ENCODE measurements at regions of chr11 and their contacts with region 1.

Region 1: DNA sequence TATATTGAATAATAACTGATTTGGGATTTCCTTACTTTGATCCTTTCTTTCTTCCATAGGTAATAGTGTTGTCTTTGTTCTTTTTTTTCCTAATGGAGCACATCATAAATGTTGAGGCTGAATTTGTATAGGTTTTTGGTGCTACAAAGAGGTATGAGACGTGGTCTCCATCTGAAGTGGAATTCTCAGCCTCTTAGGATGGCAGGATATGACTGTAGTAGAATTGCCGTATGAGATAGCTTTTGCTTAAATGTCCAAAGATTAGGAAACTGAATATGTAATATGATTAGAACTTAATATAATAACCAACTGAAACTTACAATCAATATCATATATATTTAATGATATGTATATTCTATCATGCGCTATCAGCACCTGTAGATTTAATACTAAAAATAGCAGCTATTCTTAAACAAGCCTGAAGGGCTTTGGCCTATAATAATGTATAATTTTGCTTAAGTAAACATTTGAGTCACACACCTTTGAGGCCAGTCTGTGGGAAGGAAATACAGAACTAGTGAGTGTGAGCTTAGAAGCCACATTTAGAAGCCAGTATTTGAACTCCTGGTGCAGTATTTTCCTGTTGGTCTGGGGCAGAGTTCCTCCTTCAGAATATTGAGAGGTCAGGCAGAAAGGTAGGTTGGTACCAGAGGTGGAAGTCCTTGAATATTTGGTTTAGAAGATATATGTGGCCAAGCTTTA is 62.6 kb downstream of the SWAP70 start:
- DNase-seq: no peak
- CTCF ChIP-seq: no peak

Region 2: DNA sequence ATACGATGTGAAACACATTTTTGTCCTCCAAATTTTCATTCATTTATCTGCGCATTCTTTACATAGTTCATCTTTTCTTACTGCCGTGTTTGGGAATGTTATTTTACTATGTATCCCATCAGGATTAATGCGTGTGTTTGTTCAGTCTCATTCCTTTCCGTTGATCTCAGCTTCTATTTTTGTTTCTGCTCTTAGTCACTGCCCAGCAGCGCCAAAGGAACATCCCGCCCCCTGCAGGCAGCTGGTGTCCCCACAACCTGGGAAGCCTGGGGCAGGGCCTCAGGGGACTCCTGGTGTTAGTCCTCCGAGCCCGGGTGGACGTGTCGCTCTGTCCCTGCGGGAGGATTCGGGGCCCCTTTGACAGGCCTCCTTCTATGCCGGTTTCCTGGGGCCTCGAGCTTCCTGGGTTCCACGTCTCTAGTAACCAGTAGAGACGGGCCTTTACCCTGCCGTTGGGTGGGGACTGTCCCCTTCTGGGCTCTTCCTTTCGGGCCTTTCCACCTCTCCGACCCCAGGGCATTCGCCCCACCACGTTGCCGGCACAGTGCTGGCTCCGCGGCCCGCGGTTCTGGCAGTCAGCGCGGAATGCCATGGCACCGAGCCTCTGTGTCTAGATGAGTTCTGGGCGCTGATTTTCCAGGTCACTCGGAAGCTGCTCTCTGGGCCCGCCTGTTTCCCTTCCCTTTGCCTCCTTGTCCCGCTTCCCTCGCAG is 113.2 kb before region 1 on chr11:
- in situ Hi-C with region 1: loop called (anchors 10 kb)
- DNase-seq: peak; percentile 81
- CTCF ChIP-seq: peak; percentile 91

Measured in GM13977 (cell line).